BJ (cell line): ENCODE measurements at regions of chr2 and their contacts with region 1.

Region 1: DNA sequence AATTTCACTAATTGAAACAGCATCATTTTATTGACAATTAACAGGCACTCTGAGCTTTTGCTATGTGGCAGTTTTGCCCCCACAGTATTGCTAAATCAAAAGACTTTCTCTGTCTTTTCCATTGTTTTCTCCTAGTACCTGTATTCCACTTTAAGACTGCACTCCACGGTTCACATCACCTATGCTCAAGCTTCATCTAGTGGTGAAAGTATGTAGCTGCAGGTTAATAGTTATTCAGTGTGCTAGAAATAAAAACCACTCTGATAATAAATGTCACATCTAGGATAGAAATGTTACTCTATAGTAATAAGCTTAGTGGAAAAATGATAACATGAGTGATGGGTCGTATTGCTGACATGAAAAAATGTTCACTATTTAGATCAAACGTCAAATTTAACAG is 24.6 kb downstream of the ARL6IP6 start:
- DNase-seq: no peak
- H3K4me3 ChIP-seq: no peak overlapping the region
- H3K27me3 ChIP-seq: no peaks in the 10 kb centered on the region
- CTCF ChIP-seq: peak; percentile 53

Region 2: DNA sequence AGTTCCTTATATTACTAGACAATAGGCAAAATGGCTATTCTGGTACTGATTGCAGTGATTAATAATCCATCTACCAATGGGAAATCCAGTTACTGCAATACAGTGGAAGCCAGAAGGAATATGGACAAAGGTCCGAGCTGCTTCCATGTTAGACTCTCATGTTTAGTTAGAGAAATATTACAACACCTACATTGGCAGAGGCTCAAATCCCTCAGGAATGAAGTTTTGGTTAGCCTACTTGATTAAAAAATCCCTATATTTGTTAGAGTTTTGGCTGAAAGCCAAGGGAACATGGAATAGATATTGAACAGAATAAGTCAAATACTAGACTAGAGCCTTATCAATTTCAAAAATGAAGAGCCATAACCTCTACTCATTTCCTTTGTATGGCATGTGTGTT is 23.9 kb after region 1 on chr2:
- CTCF ChIA-PET with region 1: no interaction called
- POLR2A ChIA-PET with region 1: no interaction called
- DNase-seq: no peak
- H3K4me3 ChIP-seq: no peak overlapping the region
- H3K27me3 ChIP-seq: no peaks in the 10 kb centered on the region
- CTCF ChIP-seq: no peak

Region 3: DNA sequence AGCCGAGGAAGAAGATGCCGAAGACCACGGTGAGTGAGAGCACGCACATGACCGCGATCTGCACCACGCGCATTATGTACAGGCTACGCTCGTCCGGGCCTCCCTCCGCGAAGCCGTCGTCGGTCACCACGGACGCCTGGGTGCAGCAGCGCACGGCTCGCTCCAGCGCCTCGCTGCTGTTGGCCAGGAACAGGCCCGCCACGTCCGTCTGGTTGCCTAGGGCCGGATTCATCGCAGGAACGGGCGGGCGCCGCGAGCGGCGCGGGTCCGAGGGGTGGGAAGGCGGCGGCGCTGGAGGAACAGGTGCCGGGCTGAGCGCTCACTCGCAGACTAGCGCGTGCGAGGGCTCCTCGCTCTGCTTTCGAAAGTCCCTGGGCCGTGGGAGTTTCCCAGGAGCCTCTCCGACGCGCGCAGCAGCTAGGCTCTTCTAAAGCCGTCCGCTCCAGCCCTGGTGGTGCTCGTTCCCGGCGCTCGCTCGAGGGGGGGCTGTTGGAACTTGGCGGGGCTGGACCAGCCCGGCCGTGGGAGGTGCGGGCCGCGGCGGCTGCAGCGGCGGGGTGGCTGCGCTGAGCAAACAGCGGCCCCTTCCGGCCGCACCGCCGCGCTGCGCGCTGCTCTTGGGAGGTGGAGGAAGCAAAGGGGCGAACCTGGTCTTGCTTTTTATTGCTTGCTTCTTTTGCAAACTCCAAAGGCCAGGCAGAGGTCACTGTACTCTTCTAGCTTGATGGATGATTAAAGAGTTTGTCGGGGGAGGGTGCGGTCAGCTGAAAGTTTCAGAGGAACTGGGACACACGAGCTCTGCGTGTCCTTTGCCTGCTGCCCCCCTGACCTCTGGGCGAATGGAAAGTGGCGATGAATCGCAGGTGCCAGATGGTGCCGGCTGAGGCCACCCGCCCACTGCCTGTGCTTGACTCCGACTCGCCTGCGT is 735.6 kb after region 1 on chr2 and contains the start of gene RPRM:
- CTCF ChIA-PET with region 1: interaction called, 13 read pairs
- POLR2A ChIA-PET with region 1: no interaction called
- DNase-seq: no peak
- H3K4me3 ChIP-seq: peak within 1 kb of the TSS; percentile 37
- H3K27me3 ChIP-seq: peaks cover 13% of the 10 kb centered on the region
- CTCF ChIP-seq: peak; percentile 66
- polyA plus RNA-seq, gene RPRM: not detected in 2 replicates